GM12878 (cell line): ENCODE measurements at regions of chr6 and their contacts with region 1.

Region 1: GRCh38 chr6:13795041-13795750 is 19.2 kb downstream of the MCUR1 start:
- DNase-seq: peak; percentile 71
- ATAC-seq: peak; percentile 100
- H3K4me3 ChIP-seq: no peak overlapping the region
- H3K27ac ChIP-seq: no peak overlapping the region
- H3K4me1 ChIP-seq: peaks cover 8% of the 10 kb centered on the region; the same call in 1 of the 2 replicates
- H3K27me3 ChIP-seq: no peaks in the 10 kb centered on the region
- CTCF ChIP-seq: peak; percentile 89 to 97 (median 91); a peak in 5 of 6 replicates
- EP300 ChIP-seq: no peak
- POLR2A ChIP-seq: no peak
- RAD21 ChIP-seq: peak; percentile 89

Region 2: GRCh38 chr6:13767121-13767808 is 27.9 kb before region 1 on chr6:
- CTCF ChIA-PET with region 1: no interaction called
- POLR2A ChIA-PET with region 1: no interaction called
- RAD21 ChIA-PET with region 1: no interaction called
- SMC1A ChIA-PET with region 1: no interaction called
- in situ Hi-C with region 1: no loop called
- intact Hi-C with region 1: no loop called
- DNase-seq: no peak
- ATAC-seq: peak; percentile 19
- H3K4me3 ChIP-seq: peak overlapping the region; percentile 32; the same call in 1 of the 2 replicates
- H3K27ac ChIP-seq: no peak overlapping the region
- H3K4me1 ChIP-seq: peaks cover 23% of the 10 kb centered on the region
- H3K27me3 ChIP-seq: no peaks in the 10 kb centered on the region; a peak in 1 of 4 replicates
- CTCF ChIP-seq: peak in 2 of 3 experiments; percentile 16 to 45; a peak in 3 of 6 replicates
- EP300 ChIP-seq: no peak
- POLR2A ChIP-seq: no peak
- RAD21 ChIP-seq: peak; percentile 45; the same call in 1 of the 2 replicates

Region 3: GRCh38 chr6:13814176-13814937 is 19.2 kb after region 1 on chr6 and contains the start of gene MCUR1:
- CTCF ChIA-PET with region 1: interaction called, 39 read pairs
- POLR2A ChIA-PET with region 1: interaction called, 4 read pairs
- RAD21 ChIA-PET with region 1: interaction called, 8 read pairs
- SMC1A ChIA-PET with region 1: interaction called, 9 read pairs
- in situ Hi-C with region 1: no loop called
- intact Hi-C with region 1: no loop called
- DNase-seq: peak; percentile 80
- ATAC-seq: peak; percentile 89
- H3K4me3 ChIP-seq: peak within 1 kb of the TSS; percentile 74
- H3K27ac ChIP-seq: peak within 1 kb of the TSS; percentile 95
- H3K4me1 ChIP-seq: peaks cover 6% of the 10 kb centered on the region
- H3K27me3 ChIP-seq: no peaks in the 10 kb centered on the region
- CTCF ChIP-seq: peak in 2 of 3 experiments; percentile 5 to 45; a peak in 2 of 6 replicates
- EP300 ChIP-seq: no peak
- POLR2A ChIP-seq: peak; percentile 92
- RAD21 ChIP-seq: 0 out of 2 replicates have a peak, but pooled peaks have one; percentile 2
- polyA plus RNA-seq, gene MCUR1: 4.4 to 9.4 TPM

Region 4: DNA sequence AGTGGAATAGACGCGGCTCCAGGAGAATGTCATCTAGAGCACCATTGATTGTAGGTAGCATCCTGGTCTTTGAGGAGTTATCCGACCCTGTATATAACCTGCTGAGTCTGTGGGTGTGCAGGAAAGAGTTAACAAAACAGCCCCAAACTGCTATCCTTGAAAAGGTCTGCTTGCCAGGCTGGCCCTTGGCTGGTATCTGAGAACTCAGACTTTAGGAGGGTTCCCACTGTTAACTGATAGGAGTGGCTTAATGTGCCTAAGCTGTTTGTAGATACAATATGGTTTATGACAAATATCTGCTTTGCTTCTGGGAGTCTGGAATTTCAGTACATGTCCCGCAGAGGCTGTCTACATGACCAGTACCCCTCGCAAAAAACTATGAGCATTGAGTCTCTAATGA is 46.7 kb after region 1 on chr6:
- CTCF ChIA-PET with region 1: no interaction called
- POLR2A ChIA-PET with region 1: no interaction called
- RAD21 ChIA-PET with region 1: no interaction called
- SMC1A ChIA-PET with region 1: no interaction called
- in situ Hi-C with region 1: no loop called
- intact Hi-C with region 1: no loop called
- DNase-seq: no peak
- ATAC-seq: no peak
- H3K4me3 ChIP-seq: no peak overlapping the region
- H3K27ac ChIP-seq: no peak overlapping the region
- H3K4me1 ChIP-seq: no peaks in the 10 kb centered on the region
- H3K27me3 ChIP-seq: no peaks in the 10 kb centered on the region
- CTCF ChIP-seq: no peak
- EP300 ChIP-seq: no peak
- POLR2A ChIP-seq: no peak
- RAD21 ChIP-seq: no peak

Region 5: GRCh38 chr6:13883966-13884365 is 88.8 kb after region 1 on chr6:
- CTCF ChIA-PET with region 1: no interaction called
- POLR2A ChIA-PET with region 1: no interaction called
- RAD21 ChIA-PET with region 1: no interaction called
- SMC1A ChIA-PET with region 1: no interaction called
- in situ Hi-C with region 1: no loop called
- intact Hi-C with region 1: loop called (anchors 5 kb)
- DNase-seq: no peak
- ATAC-seq: no peak
- H3K4me3 ChIP-seq: no peak overlapping the region
- H3K27ac ChIP-seq: no peak overlapping the region
- H3K4me1 ChIP-seq: no peaks in the 10 kb centered on the region
- H3K27me3 ChIP-seq: no peaks in the 10 kb centered on the region; a peak in 1 of 4 replicates
- CTCF ChIP-seq: no peak
- EP300 ChIP-seq: no peak
- POLR2A ChIP-seq: no peak
- RAD21 ChIP-seq: no peak

Region 6: GRCh38 chr6:14037402-14038277 is 242.4 kb after region 1 on chr6:
- CTCF ChIA-PET with region 1: interaction called, 3 read pairs
- POLR2A ChIA-PET with region 1: no interaction called
- RAD21 ChIA-PET with region 1: no interaction called
- SMC1A ChIA-PET with region 1: interaction called, 3 read pairs
- in situ Hi-C with region 1: no loop called
- intact Hi-C with region 1: loop called (anchors 5 kb)
- DNase-seq: no peak
- ATAC-seq: peak; percentile 16; the same call in 1 of the 3 replicates
- H3K4me3 ChIP-seq: no peak overlapping the region
- H3K27ac ChIP-seq: no peak overlapping the region
- H3K4me1 ChIP-seq: peaks cover 14% of the 10 kb centered on the region
- H3K27me3 ChIP-seq: no peaks in the 10 kb centered on the region; a peak in 1 of 4 replicates
- CTCF ChIP-seq: no peak
- EP300 ChIP-seq: no peak
- POLR2A ChIP-seq: no peak
- RAD21 ChIP-seq: no peak

Region 7: DNA sequence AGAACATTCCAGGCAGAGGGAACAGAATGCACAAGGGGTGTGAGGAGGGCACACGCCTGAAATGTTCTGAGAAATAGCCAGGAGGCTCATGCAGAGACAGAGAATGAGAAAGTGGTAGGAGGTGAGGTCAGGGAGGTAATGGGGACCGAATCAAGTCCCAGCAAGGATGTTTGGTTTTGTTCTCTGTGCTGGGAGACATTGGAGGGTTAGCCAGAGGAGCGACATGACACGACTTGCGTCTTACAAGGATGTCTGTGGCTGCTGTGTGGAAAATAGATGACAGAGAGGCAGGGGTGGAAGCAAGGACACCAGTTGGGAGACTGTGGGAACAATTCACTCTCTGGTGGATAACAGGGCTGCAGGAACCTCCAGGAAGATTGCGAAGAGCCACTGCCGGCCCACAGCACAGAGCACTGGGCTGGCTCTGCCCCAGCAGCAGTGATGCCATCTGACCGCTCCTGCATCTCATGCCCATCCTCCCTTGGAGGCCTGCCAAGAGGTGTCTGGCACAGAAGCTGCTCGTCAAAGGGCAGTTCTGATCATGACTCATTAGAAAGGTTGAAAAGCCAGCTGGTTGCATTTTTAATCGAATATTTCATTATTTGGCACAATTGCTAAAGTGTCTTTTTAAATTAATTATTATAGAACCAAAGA is 264.7 kb after region 1 on chr6:
- CTCF ChIA-PET with region 1: interaction called, 19 read pairs
- POLR2A ChIA-PET with region 1: interaction called, 3 read pairs
- RAD21 ChIA-PET with region 1: interaction called, 41 read pairs
- SMC1A ChIA-PET with region 1: no interaction called
- in situ Hi-C with region 1: loop called (anchors 5 kb)
- intact Hi-C with region 1: no loop called
- DNase-seq: no peak
- ATAC-seq: no peak
- H3K4me3 ChIP-seq: no peak overlapping the region
- H3K27ac ChIP-seq: no peak overlapping the region
- H3K4me1 ChIP-seq: no peaks in the 10 kb centered on the region
- H3K27me3 ChIP-seq: peaks cover 5 to 8% of the 10 kb centered on the region in 2 experiments; a peak in 3 of 4 replicates
- CTCF ChIP-seq: no peak
- EP300 ChIP-seq: no peak
- POLR2A ChIP-seq: no peak
- RAD21 ChIP-seq: no peak